Activated CD4-positive, alpha-beta memory T cell treated with anti-CD3 and anti-CD28 coated beads for 36 hours (primary cell): ENCODE measurements at regions of chr1 and their contacts with region 1.

Region 1: GRCh38 chr1:169491845-169492281 is 6.1 kb upstream of the SLC19A2 start:
- DNase-seq: peak; percentile 82
- H3K4me3 Mint-ChIP-seq: no peak overlapping the region
- H3K27ac Mint-ChIP-seq: peak overlapping the region; percentile 47
- H3K4me1 Mint-ChIP-seq: peaks cover 56% of the 10 kb centered on the region
- H3K27me3 Mint-ChIP-seq: peaks cover 3% of the 10 kb centered on the region

Region 2: GRCh38 chr1:169460191-169460833 is 31.6 kb before region 1 on chr1:
- CTCF ChIA-PET with region 1: no interaction called
- POLR2A ChIA-PET with region 1: no interaction called
- intact Hi-C with region 1: loop called (anchors 1 kb)
- DNase-seq: peak; percentile 43
- H3K4me3 Mint-ChIP-seq: peak overlapping the region; percentile 43
- H3K27ac Mint-ChIP-seq: no peak overlapping the region
- H3K4me1 Mint-ChIP-seq: peaks cover 18% of the 10 kb centered on the region
- H3K27me3 Mint-ChIP-seq: peaks cover 16% of the 10 kb centered on the region

Region 3: DNA sequence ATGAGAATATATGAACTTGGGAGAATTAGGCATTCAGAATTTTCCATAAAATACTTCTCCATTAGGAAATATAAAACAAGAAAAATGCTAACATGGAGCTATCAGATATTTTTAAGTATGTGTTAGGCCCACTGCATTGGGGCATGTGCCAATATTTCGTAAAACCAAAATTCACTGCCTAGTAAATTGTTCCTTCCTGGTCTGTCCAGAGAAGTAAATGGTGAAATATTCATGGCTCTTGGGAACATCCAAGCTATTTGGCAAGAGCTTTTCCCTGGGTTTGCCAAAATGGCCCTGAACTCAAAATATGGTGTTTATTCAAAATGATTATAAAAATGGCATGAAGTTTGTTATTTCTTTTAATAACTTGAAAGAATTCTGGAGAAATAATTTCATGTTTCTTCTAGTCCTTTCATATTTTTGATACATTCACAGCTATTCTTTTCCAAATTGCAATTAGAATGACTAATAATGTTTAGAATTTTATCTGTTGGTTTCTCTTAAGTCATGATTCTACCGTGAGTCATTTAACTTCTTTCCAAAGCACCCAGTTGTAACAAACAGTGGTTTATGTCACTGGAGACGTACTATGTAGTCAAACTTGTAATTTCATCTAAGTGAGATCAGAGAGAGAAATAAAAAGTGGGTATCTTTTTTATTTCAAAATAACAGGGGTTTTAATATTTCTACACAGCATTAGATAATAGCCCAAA is 19.6 kb after region 1 on chr1:
- CTCF ChIA-PET with region 1: interaction called, 4 read pairs
- POLR2A ChIA-PET with region 1: interaction called, 11 read pairs
- intact Hi-C with region 1: loop called (anchors 1 kb)
- DNase-seq: no peak
- H3K4me3 Mint-ChIP-seq: no peak overlapping the region
- H3K27ac Mint-ChIP-seq: no peak overlapping the region
- H3K4me1 Mint-ChIP-seq: peaks cover 26% of the 10 kb centered on the region
- H3K27me3 Mint-ChIP-seq: no peaks in the 10 kb centered on the region

Region 4: DNA sequence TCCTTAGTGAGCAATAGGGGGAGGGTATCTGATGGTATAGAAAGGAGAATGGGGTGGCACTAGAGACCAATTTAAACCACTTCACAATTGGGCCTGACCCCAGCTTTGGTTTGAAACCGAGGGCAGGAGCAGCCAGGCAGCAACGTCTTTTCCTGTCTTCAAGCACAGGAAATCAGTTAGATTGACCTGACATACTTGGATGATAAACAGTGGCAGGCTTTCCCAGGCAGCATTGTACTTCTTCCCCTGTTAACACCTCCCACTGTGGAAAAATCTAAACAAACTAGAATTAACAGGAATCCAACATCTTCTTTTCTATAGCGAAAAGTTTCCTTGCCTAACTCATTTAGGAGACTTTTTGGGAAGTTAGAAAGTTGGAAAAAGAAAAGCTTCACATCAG is 179.0 kb after region 1 on chr1:
- CTCF ChIA-PET with region 1: no interaction called
- POLR2A ChIA-PET with region 1: no interaction called
- intact Hi-C with region 1: no loop called
- DNase-seq: no peak
- H3K4me3 Mint-ChIP-seq: no peak overlapping the region
- H3K27ac Mint-ChIP-seq: peak overlapping the region; percentile 59
- H3K4me1 Mint-ChIP-seq: peaks cover 47% of the 10 kb centered on the region
- H3K27me3 Mint-ChIP-seq: no peaks in the 10 kb centered on the region

Region 5: DNA sequence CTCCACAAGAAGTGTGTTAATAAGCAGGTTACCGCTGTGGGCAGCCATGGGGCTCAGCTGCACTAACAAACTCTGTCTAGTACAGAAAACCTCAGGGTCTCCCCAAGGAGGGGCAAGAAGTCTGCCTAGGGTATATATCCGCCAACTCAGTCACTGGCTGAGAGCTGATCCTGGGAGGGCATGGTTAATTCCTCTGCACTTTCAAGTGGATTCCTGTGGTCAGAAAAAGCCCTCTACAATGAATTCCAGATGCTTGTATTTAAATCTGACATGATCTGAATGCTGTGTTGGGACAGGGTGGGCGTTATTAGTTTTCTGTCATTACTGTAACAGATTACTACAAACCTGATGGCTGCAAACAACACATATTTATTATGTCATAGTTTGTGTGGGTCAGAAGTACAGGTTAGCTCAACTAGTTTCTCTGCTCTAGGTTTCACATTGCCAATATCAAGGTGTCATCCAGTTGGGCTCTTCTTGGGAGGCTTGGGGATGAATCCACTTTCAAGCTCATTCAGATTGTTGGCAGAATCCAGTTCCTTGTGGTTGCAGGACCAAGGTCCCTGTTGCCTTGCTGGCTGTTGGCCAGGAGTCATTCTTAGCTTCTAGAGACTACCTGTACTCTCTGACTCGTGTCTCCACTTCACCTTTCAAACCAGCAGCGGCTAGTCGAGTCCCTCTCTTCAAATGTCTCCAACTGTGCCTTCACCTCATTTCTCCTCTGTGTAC is 250.0 kb after region 1 on chr1:
- CTCF ChIA-PET with region 1: no interaction called
- POLR2A ChIA-PET with region 1: no interaction called
- intact Hi-C with region 1: no loop called
- DNase-seq: no peak
- H3K4me3 Mint-ChIP-seq: no peak overlapping the region
- H3K27ac Mint-ChIP-seq: no peak overlapping the region
- H3K4me1 Mint-ChIP-seq: no peaks in the 10 kb centered on the region
- H3K27me3 Mint-ChIP-seq: peaks cover 3% of the 10 kb centered on the region